Panc1 (cell line): ENCODE measurements at regions of chr3 and their contacts with region 1.

Region 1: DNA sequence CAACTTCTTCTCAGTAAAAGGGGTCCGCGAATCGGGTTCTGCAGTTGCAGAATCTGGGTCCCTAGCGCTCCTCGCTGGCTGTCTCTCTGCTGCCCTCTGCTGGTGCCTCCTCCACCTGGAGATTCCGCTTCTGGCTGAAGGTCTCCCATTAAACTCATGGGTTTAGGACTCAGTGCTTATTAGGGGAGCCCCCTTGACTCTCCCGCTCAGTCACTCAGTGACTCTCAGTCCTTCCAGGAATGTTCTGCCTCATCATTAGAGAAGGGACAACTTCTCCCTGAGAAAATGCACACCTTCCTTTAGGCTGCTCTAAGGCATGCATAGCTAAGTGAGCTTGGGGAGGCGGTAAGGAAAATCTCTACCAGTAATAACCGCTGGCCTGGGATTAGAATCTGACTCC is 7.1 kb downstream of the CPN2 start:
- DNase-seq: no peak
- ATAC-seq: peak; percentile 79
- H3K4me3 ChIP-seq: no peak overlapping the region
- H3K27ac ChIP-seq: no peak overlapping the region
- H3K4me1 ChIP-seq: no peaks in the 10 kb centered on the region
- H3K27me3 ChIP-seq: no peaks in the 10 kb centered on the region
- CTCF ChIP-seq: peak; percentile 100

Region 2: DNA sequence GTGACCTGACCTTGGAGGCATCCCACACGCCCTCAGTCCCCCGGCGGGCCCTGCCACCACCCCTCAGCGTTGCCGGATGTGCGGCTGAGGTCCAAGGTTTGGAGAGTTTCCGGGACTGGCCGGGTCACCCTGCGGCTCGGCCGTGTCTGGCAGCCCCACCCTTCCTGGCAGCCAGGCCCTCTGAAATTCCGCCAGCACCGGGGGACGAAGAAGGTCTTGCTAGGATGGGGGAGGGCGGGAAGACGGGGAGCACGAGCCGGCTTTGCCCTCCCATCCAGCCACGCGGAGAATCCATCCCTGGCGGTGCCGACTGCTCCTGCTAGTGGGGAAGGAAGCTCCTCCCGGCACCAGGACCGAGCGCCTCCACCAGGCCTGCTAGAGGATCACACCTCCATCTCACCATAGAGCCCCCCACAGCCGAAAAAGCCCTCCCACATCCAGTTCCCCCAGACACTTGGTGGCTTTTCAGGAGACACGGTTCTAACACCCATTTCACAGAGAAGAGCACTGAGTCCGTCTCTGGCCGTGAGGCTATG is 74.3 kb before region 1 on chr3:
- CTCF ChIA-PET with region 1: no interaction called
- POLR2A ChIA-PET with region 1: no interaction called
- in situ Hi-C with region 1: no loop called
- intact Hi-C with region 1: no loop called
- DNase-seq: no peak
- ATAC-seq: no peak
- H3K4me3 ChIP-seq: no peak overlapping the region
- H3K27ac ChIP-seq: peak overlapping the region; percentile 48; the same call in 1 of the 2 replicates
- H3K4me1 ChIP-seq: peaks cover 25% of the 10 kb centered on the region
- H3K27me3 ChIP-seq: no peaks in the 10 kb centered on the region
- CTCF ChIP-seq: no peak

Region 3: DNA sequence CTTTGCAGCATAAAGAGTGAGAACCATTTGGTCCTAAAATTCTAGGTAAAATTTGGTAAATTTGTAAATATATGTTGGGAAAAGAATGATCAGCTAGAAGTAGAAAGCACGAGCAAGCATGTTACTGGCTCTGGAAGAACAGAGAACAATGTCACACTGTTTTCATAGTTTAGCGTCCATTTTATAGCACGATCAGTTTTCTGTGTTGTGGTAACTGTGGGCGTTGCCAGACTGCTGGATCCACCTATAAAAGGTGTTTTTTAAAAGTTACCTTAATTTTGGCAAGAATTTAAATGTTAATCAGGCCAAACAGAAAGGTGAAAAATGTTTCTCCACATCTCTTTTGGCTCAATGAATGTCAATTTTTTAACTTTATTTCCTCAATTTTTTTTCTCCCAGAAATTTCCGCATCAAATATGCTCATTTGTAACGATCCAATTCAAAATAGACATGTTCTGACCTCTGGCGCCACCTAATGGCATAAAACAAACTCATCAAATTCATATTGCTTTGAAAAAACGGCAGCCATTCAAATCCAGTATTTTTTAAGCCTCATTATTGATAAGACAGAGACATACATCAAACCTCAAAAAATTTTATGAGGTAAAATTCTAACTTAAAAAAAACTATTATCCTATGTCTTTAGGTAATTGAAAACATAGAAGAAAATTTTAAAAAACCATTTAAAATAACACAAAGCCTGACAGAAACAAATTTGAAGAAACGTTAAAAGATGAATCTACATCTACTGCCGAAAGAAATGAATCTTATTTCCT is 60.5 kb after region 1 on chr3:
- CTCF ChIA-PET with region 1: interaction called, 4 read pairs
- POLR2A ChIA-PET with region 1: interaction called, 10 read pairs
- in situ Hi-C with region 1: no loop called
- intact Hi-C with region 1: no loop called
- DNase-seq: no peak
- ATAC-seq: no peak
- H3K4me3 ChIP-seq: no peak overlapping the region
- H3K27ac ChIP-seq: 0 out of 2 replicates have a peak overlapping the region, but pooled peaks have one; percentile 18
- H3K4me1 ChIP-seq: no peaks in the 10 kb centered on the region
- H3K27me3 ChIP-seq: no peaks in the 10 kb centered on the region
- CTCF ChIP-seq: peak; percentile 79; the same call in 1 of the 2 replicates

Region 4: GRCh38 chr3:194496217-194496919 is 152.4 kb after region 1 on chr3:
- CTCF ChIA-PET with region 1: interaction called, 10 read pairs
- POLR2A ChIA-PET with region 1: no interaction called
- in situ Hi-C with region 1: no loop called
- intact Hi-C with region 1: no loop called
- DNase-seq: no peak
- ATAC-seq: no peak
- H3K4me3 ChIP-seq: no peak overlapping the region
- H3K27ac ChIP-seq: no peak overlapping the region
- H3K4me1 ChIP-seq: peaks cover 25% of the 10 kb centered on the region
- H3K27me3 ChIP-seq: no peaks in the 10 kb centered on the region
- CTCF ChIP-seq: no peak

Region 5: DNA sequence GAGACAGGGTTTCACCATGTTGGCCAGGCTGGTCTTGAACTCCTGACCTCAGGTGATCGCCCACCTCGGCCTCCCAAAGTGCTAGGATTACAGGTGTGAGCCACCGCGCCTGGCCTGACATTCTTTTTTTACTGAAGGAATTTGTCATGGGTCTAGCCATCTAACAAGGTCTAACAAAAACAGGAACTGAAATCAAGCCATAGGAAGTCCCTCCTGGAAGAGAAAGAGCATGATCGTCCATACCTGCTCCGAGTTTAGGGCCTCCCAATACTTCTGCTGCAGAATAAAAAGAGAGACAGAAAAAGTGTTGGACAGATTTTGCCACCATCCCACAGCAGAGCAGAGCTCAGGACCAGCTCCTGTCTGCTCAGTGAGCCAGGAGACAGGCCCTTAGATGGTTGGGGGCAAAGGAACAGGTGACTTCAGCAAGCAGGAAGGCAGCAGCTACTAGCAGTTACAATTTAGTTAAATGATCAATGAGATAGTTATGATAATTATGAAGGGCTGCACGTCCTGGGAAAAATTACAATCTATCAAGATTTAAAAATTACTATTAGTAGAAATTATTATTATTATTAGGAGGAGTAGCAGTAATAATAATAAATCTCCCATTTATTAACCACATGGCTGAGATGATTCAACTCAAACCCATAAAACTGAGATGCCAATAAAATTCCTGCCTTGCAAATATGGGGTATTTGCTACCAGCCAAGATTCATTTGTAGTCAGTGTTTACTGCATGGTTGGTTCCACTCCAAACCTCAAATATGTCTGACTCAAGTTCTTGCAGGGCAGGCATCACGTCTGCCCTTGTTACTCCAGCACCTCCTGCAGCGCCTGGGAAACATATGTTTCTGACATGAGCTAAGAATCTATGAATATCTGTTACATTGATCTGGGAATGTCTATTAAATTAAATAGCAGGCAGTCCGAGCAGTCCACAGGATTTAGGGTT is 249.1 kb after region 1 on chr3:
- CTCF ChIA-PET with region 1: no interaction called
- POLR2A ChIA-PET with region 1: interaction called, 4 read pairs
- in situ Hi-C with region 1: no loop called
- intact Hi-C with region 1: loop called (anchors 10 kb)
- DNase-seq: peak; percentile 97
- ATAC-seq: peak; percentile 94
- H3K4me3 ChIP-seq: no peak overlapping the region
- H3K27ac ChIP-seq: peak overlapping the region; percentile 79
- H3K4me1 ChIP-seq: peaks cover 24% of the 10 kb centered on the region
- H3K27me3 ChIP-seq: no peaks in the 10 kb centered on the region
- CTCF ChIP-seq: no peak